ENCODE measurements at regions of chr9 and their contacts with region 1.

Region 1: GRCh38 chr9:122827761-122828093 is 661 bp downstream of the PDCL start:
- DNase-seq: no peak
- H3K4me3 Mint-ChIP-seq: peak overlapping the region; percentile 93
- H3K27ac Mint-ChIP-seq: peak overlapping the region; percentile 94
- H3K4me1 Mint-ChIP-seq: peaks cover 23% of the 10 kb centered on the region
- H3K27me3 Mint-ChIP-seq: no peaks in the 10 kb centered on the region

Region 2: GRCh38 chr9:122526600-122526999 is 301.1 kb before region 1 on chr9:
- intact Hi-C with region 1: no loop called
- DNase-seq: no peak
- H3K4me3 Mint-ChIP-seq: no peak overlapping the region
- H3K27ac Mint-ChIP-seq: no peak overlapping the region
- H3K4me1 Mint-ChIP-seq: no peaks in the 10 kb centered on the region
- H3K27me3 Mint-ChIP-seq: no peaks in the 10 kb centered on the region

Region 3: DNA sequence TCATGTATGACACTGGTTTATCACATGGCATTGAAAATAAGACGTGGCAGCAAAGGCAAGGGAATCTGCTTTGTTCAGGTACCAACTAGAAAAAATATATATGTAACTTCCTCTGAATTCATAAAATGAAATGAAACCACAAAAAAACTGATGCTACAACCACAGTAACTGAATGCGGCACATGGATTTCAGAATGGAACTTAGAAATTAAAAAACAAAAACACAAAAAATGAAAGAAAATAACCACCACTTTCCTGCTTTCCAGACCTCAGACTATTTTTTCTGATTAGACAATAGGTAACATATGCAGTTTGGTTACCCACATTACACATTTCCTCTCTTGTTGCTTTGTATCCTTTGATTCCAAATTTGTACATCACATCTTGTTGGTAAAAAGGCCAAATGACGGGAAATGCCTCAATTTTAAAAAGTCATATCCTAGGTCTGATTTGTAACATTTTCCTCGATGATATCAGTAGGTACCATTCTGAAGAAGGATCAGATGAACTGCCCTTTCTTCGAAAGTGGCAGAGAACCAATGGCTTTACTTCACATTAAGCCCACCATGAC is 18.7 kb after region 1 on chr9:
- intact Hi-C with region 1: loop called (anchors 2 kb)
- DNase-seq: no peak
- H3K4me3 Mint-ChIP-seq: peak overlapping the region; percentile 44
- H3K27ac Mint-ChIP-seq: peak overlapping the region; percentile 94
- H3K4me1 Mint-ChIP-seq: peaks cover 31% of the 10 kb centered on the region
- H3K27me3 Mint-ChIP-seq: no peaks in the 10 kb centered on the region

Region 4: DNA sequence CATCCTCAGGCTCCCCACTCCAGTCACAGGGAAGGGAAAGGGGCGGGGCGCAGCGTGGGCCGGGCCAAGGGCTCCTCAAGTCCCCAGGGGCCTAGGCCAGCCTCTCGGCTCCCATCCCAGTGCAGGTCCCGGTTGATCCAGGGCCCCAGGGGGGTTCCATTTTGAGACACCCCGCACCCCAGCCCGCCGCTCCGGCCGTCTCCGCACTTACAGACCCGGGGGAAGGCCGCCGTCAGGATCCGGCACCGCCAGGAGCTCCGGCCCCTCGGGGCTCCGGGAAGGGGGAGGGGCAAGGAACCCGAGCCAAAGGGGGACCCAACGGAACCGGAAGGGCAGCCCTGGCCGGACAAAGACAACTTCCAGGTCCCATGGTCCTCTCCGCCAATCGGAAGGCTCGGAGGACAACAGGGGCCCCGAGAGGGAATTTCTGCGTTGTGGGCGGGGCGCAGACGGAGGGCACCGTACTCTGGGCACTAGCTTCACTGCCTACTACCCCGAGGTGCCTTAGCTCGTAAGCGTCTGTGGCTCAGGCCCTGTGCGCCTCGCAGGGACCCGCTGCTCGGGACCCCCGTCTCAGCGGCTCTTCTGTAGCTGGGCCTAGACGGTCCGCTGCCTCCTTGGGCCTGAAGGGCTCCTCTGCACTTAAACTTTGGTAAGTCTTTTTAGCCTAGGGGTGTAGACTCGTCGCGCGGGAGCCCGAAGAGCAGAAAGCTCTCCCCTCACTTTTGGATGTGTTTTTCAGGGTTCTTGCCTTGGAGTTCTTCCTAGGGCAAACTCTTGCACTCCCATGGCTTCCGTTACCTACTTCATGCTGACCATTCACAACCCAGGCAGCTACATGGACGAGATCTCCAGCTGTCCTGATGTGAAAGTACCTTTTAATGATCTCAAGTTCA is 103.7 kb after region 1 on chr9 and contains the start of gene ZBTB26:
- intact Hi-C with region 1: loop called (anchors 1 kb)
- DNase-seq: peak; percentile 96
- H3K4me3 Mint-ChIP-seq: no peak within 1 kb of the TSS
- H3K27ac Mint-ChIP-seq: peak within 1 kb of the TSS; percentile 91
- H3K4me1 Mint-ChIP-seq: peaks cover 11% of the 10 kb centered on the region
- H3K27me3 Mint-ChIP-seq: no peaks in the 10 kb centered on the region
- total RNA-seq, gene ZBTB26: 8.4 and 8.9 TPM in 2 replicates

Measured in activated CD4-positive, alpha-beta T cell treated with anti-CD3 and anti-CD28 coated beads, Interleukin-2, amount 10 ng/mL, durations not matched to agents 24 days and 14 days (primary cell).